Upper lobe of right lung (tissue), 1 donor: ENCODE measurements at regions of chr4 and their contacts with region 1.

Region 1: DNA sequence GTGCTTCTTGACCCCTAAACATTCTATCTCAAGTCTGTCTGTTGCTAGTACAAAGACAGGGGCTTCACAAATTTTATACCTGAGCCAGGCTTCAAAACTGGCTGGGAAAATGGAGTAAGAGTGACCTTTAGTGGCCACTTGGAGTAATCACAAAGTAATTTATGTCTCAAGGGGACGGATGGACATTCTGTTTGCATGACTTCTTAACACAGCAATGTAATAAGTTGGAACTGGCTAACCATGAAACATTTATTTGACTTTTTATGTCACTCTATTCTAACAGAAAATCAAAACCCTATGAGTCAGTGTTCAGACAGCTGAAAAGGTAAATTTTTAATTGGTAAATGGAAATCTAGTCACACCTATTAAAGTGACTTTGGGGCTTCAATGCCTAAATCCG is 600.6 kb downstream of the ANKRD50 start:
- DNase-seq: no peak
- ATAC-seq: peak; percentile 79
- H3K4me3 ChIP-seq: no peak overlapping the region
- H3K27ac ChIP-seq: peak overlapping the region; percentile 0
- H3K4me1 ChIP-seq: no peaks in the 10 kb centered on the region
- H3K27me3 ChIP-seq: no peaks in the 10 kb centered on the region
- CTCF ChIP-seq: peak; percentile 64

Region 2: GRCh38 chr4:123102897-123103471 is 1008.9 kb before region 1 on chr4:
- intact Hi-C with region 1: loop called (anchors 10 kb)
- DNase-seq: no peak
- ATAC-seq: peak; percentile 82
- H3K4me3 ChIP-seq: no peak overlapping the region
- H3K27ac ChIP-seq: no peak overlapping the region
- H3K4me1 ChIP-seq: peaks cover 6% of the 10 kb centered on the region
- H3K27me3 ChIP-seq: no peaks in the 10 kb centered on the region
- CTCF ChIP-seq: peak; percentile 79

Region 3: DNA sequence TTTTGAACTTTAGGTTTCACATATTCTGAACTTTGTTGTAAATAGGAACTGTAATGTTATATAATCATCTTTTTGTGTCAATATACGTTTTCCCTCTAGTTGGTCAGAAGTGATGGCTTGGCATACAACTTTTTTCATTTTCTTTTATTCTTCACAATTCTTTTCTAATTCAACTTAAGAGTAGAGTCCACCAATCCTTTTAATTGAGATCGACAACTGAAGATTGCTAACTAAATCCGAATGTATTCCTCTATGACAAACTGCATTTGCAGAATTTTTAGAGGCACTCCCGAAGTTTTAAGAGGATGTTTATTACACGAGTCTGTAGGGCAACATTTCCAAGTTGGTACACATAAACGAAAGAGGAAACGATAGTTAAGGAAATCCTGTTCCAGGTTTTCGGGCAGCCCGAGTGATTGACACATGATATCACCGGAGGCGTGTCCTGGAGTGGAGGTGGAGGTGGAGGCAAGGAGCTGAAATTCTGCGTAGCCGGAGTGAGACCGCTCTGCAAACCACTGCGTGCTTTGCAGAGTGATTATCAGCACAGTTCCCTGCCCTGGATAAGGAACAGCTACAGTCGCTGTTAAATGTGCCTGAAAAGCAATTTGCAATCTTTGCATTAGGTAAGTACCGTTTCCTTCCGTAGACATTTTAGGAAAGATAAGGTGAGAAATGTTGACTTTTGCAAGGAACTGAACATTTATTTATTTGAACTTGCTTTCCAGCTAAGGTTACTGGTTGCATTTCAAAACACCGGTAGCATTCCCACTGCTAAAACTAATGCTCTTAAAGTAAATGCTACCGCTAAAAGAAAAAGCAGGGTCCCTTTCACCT is 715.4 kb before region 1 on chr4 and contains the start of gene SPRY1:
- intact Hi-C with region 1: loop called (anchors 10 kb)
- DNase-seq: peak; percentile 90
- ATAC-seq: peak; percentile 83
- H3K4me3 ChIP-seq: peak within 1 kb of the TSS; percentile 73
- H3K27ac ChIP-seq: peak within 1 kb of the TSS; percentile 94
- H3K4me1 ChIP-seq: no peaks in the 10 kb centered on the region
- H3K27me3 ChIP-seq: no peaks in the 10 kb centered on the region
- CTCF ChIP-seq: no peak
- total RNA-seq, gene SPRY1: 134 TPM